ENCODE measurements at regions of chr17 and their contacts with region 1.

Region 1: GRCh38 chr17:28951991-28952975 is 965 bp upstream of the PHF12 start:
- DNase-seq: peak; percentile 97
- ATAC-seq: peak; percentile 77
- H3K4me3 ChIP-seq: peak overlapping the region; percentile 82
- H3K27ac ChIP-seq: peak overlapping the region; percentile 97
- H3K4me1 ChIP-seq: peaks cover 22% of the 10 kb centered on the region
- H3K27me3 ChIP-seq: no peaks in the 10 kb centered on the region
- CTCF ChIP-seq: no peak

Region 2: DNA sequence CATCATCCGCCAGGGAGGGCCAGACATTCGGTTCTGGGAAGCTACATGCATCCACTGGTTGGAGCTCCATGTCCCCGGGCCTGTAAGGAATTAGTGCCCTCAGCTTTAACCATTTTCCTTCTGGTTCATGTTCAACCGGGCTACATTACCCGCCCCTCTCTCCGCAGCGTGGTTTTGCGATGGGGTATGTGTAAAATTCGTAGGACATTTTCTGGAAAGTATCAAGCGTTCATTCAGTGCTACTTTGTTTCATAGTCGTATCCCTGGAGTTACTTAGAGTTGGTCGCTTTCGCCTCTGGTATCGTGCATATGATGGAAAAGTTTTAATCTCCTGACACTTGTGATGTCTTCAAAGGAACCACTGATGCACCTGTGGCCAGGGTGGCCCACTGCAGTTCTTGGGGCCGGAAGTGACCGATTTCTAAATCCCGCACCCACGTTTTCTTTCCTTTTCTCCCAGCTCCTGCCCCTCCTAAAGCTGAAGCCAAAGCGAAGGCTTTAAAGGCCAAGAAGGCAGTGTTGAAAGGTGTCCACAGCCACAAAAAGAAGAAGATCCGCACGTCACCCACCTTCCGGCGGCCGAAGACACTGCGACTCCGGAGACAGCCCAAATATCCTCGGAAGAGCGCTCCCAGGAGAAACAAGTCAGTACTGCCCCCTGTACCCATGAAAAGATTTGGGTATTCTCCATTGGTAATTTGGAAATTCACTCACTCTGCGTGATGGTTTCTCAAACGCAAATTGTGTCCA is 231.9 kb before region 1 on chr17:
- CTCF ChIA-PET with region 1: no interaction called
- POLR2A ChIA-PET with region 1: interaction called, 12 read pairs
- intact Hi-C with region 1: no loop called
- DNase-seq: no peak
- ATAC-seq: no peak
- H3K4me3 ChIP-seq: peak overlapping the region; percentile 93
- H3K27ac ChIP-seq: peak overlapping the region; percentile 75
- H3K4me1 ChIP-seq: peaks cover 43% of the 10 kb centered on the region
- H3K27me3 ChIP-seq: no peaks in the 10 kb centered on the region
- CTCF ChIP-seq: no peak

Region 3: GRCh38 chr17:28902819-28903545 is 49.3 kb before region 1 on chr17 and contains the start of gene DHRS13:
- CTCF ChIA-PET with region 1: no interaction called
- POLR2A ChIA-PET with region 1: no interaction called
- intact Hi-C with region 1: loop called (anchors 5 kb)
- DNase-seq: peak; percentile 92
- ATAC-seq: peak; percentile 91
- H3K4me3 ChIP-seq: peak within 1 kb of the TSS; percentile 78
- H3K27ac ChIP-seq: no peak within 1 kb of the TSS
- H3K4me1 ChIP-seq: peaks cover 11% of the 10 kb centered on the region
- H3K27me3 ChIP-seq: no peaks in the 10 kb centered on the region
- CTCF ChIP-seq: peak; percentile 88
- total RNA-seq, gene DHRS13: 4.9 and 5.1 TPM in 2 replicates

Measured in PC-3 (cell line).